Activated CD4-positive, alpha-beta T cell treated with anti-CD3 and anti-CD28 coated beads, Interleukin-2, amount 10 ng/mL, durations not matched to agents 24 days and 14 days (primary cell): ENCODE measurements at regions of chr14 and their contacts with region 1.

Region 1: GRCh38 chr14:20343092-20343861 is at the start of gene PARP2:
- DNase-seq: peak; percentile 98
- H3K4me3 Mint-ChIP-seq: peak within 1 kb of the TSS; percentile 99
- H3K27ac Mint-ChIP-seq: peak within 1 kb of the TSS; percentile 97
- H3K4me1 Mint-ChIP-seq: peaks cover 18% of the 10 kb centered on the region
- H3K27me3 Mint-ChIP-seq: peaks cover 2% of the 10 kb centered on the region
- total RNA-seq, gene PARP2: 32.0 and 33.1 TPM in 2 replicates

Region 2: DNA sequence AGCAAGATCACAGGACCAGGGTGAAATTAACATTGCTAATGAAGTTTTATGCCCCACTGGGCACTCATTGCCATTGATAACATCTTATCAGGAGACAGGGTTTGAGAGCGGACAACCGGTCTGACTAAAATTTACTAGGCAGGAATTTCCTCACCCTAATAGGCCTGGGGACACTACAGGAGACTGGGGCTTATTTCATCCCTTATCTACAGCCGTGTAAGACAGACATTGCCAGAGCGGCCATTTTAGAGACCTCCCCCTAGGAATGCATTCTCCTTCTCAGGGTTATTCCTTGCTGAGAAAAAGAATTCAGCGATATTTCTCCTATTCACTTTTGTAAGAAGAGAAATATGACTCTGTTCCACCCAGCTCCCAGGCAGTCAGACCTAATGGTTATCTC is 224.5 kb before region 1 on chr14:
- intact Hi-C with region 1: no loop called
- DNase-seq: no peak
- H3K4me3 Mint-ChIP-seq: no peak overlapping the region
- H3K27ac Mint-ChIP-seq: no peak overlapping the region
- H3K4me1 Mint-ChIP-seq: no peaks in the 10 kb centered on the region
- H3K27me3 Mint-ChIP-seq: peaks cover under 1% of the 10 kb centered on the region

Region 3: DNA sequence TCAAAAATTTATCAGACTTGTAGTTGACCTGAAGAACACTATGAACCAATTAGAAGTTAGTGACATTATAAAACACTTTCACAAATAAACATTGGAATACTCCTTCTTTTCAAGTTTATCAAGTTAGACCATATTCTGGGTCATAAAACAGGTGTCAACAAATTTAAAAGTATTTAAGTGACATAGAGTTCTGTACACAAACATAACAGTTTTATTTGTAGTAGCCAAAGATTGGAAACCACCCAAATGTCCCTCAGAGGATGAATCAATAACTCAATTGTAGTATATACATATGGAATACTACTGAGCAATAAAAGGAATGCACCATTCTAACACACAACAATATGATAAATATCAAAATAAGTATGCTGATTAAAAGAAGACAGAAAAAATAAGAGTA is 176.2 kb before region 1 on chr14:
- intact Hi-C with region 1: no loop called
- DNase-seq: no peak
- H3K4me3 Mint-ChIP-seq: no peak overlapping the region
- H3K27ac Mint-ChIP-seq: no peak overlapping the region
- H3K4me1 Mint-ChIP-seq: no peaks in the 10 kb centered on the region
- H3K27me3 Mint-ChIP-seq: no peaks in the 10 kb centered on the region

Region 4: DNA sequence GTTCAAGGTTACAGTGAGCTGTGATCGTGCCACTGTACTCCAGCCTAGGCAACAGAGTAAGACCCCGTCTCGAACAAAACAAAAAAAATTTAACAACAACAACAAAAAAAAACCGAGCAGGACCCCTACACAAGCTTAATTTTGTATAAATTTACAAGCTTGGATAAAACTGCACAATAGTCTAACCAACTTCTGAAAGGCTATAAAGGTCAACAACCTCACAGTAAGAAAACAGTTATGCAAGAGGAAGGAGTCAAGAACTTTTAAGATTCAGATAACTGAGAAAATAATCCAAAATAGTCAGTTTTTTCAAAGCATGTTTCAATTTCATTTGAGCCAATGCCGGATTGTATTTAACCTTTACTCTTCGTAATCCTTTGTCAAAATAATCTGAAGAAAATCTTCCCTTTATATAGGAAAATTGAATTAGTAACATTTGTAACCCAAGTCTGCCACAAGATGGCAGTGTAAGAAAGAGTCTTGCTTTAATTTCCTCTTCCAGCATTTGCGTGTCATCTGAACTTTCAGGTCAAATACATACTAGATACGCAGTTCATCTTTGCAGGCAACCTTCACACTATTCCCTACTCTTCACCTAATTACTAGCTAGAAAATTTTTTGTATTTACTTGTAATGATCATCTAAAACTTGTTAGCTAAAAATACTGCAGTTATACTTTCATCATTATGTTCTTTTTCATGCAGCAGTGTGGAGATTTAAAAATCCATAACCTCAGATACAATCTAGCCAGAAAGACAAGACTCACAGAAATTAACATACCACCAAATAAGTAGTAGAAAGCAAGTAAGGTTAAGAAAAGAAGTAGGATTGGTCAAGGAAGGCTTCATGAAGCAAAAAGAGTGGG is 16.0 kb before region 1 on chr14:
- intact Hi-C with region 1: loop called (anchors 1 kb)
- DNase-seq: peak; percentile 83
- H3K4me3 Mint-ChIP-seq: peak overlapping the region; percentile 56
- H3K27ac Mint-ChIP-seq: peak overlapping the region; percentile 31
- H3K4me1 Mint-ChIP-seq: peaks cover 31% of the 10 kb centered on the region
- H3K27me3 Mint-ChIP-seq: no peaks in the 10 kb centered on the region

Region 5: GRCh38 chr14:20365928-20366327 is 22.7 kb after region 1 on chr14:
- intact Hi-C with region 1: loop called (anchors 1 kb)
- DNase-seq: no peak
- H3K4me3 Mint-ChIP-seq: no peak overlapping the region
- H3K27ac Mint-ChIP-seq: no peak overlapping the region
- H3K4me1 Mint-ChIP-seq: peaks cover 5% of the 10 kb centered on the region
- H3K27me3 Mint-ChIP-seq: no peaks in the 10 kb centered on the region

Region 6: DNA sequence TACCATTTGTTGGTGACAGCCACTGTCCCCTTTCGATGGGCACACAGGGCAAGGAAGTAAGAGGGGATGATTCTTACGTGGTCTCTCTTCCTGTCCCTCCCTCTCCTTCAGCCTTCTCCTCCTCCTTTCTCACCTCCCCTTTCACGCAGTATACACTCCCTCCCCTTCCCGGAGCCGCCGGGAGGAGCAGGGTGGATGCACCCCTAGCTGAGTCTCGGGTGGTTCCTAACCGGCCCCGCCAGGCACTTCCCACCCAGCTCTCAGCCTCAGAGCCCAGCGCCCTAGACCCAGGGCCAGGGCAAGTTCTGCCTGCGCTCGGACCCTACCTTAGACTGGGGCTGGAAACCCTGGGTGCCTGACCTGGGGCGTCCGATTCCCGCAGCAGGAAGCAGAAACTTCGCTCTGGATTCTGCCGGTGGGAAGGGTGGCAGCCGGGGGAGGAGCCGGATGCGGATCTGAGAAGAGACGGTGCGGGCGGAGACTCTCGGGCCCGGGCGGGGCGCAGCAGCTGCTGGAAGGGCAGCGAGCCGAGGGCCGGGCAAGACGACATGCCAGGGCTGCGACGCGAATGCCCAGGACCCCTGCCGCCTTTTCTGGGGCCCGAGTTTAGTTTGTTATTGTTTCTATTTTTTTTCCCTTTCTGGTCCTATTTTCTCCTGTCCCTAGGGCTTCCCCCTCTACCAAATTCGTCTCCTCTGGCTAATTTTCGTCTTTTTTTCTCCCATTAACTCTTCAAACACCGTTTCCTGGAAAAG is 69.9 kb after region 1 on chr14 and contains the start of gene TEP1:
- intact Hi-C with region 1: loop called (anchors 1 kb)
- DNase-seq: peak; percentile 93
- H3K4me3 Mint-ChIP-seq: peak within 1 kb of the TSS; percentile 97
- H3K27ac Mint-ChIP-seq: peak within 1 kb of the TSS; percentile 96
- H3K4me1 Mint-ChIP-seq: peaks cover 43% of the 10 kb centered on the region
- H3K27me3 Mint-ChIP-seq: no peaks in the 10 kb centered on the region
- total RNA-seq, gene TEP1: 34.6 and 35.8 TPM in 2 replicates

Region 7: GRCh38 chr14:20461274-20462001 is 118.2 kb after region 1 on chr14 and contains the start of gene PIP4P1:
- intact Hi-C with region 1: loop called (anchors 1 kb)
- DNase-seq: peak; percentile 99
- H3K4me3 Mint-ChIP-seq: peak within 1 kb of the TSS; percentile 89
- H3K27ac Mint-ChIP-seq: peak within 1 kb of the TSS; percentile 95
- H3K4me1 Mint-ChIP-seq: peaks cover 25% of the 10 kb centered on the region
- H3K27me3 Mint-ChIP-seq: no peaks in the 10 kb centered on the region
- total RNA-seq, gene PIP4P1: 29.5 and 30.7 TPM in 2 replicates

Region 8: GRCh38 chr14:20682435-20683124 is 339.3 kb after region 1 on chr14:
- intact Hi-C with region 1: loop called (anchors 1 kb)
- DNase-seq: peak; percentile 92
- H3K4me3 Mint-ChIP-seq: no peak overlapping the region
- H3K27ac Mint-ChIP-seq: no peak overlapping the region
- H3K4me1 Mint-ChIP-seq: peaks cover 27% of the 10 kb centered on the region
- H3K27me3 Mint-ChIP-seq: peaks cover 2% of the 10 kb centered on the region